ENCODE measurements at regions of chr19 and their contacts with region 1.

Region 1: DNA sequence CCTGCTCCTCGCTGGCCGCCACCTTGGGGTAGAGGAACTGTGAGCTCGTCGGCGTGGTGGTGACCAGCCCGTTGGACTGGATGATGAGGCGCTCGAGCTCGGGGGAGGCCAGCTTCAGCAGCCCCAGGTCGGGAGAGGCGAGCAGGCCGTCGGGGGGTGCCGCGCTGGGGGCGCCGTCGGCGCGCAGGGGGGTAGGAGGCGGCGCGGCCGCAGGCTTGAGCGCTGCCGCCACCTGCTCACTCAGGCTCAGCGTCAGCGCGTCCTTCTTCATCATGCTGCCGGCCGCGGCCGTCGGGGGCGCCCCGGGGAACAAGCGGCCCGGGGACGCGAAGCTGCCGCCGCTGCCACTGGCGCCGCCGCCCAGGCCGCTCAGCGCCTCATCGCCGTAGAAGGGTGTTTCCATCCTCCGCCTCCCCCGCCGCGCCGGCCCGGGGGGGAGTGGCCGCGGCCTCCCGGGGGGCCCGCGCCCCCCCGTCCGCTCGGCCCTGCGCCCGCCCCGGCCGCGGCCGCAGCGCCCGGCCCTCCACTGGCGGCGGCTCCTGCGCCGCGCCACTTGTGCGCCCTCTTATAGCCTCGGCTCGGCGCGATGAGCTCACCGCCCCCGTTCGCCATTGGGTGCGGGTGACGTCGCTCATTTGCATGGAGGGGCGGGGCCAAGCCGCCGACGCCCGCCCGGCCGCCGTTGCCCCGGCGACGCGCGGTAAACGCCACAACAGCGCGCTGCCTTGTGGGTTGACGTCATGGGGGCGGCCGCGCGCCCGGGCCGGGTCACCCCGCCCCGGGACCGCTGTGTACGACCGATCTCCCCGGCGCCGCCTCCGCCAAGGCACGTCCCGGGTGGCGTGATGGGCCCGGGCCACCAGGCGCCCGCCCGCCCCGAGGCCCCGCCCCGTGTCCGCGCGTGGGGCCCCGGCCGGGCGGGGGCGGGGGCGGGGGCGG is at the start of gene JUND:
- DNase-seq: peak; percentile 98
- ATAC-seq: peak; percentile 82
- H3K4me3 ChIP-seq: peak within 1 kb of the TSS; percentile 89
- H3K27ac ChIP-seq: peak within 1 kb of the TSS; percentile 99
- H3K4me1 ChIP-seq: peaks cover 18% of the 10 kb centered on the region
- H3K27me3 ChIP-seq: no peaks in the 10 kb centered on the region
- CTCF ChIP-seq: no peak
- total RNA-seq, gene JUND: 151 and 157 TPM in 2 replicates

Region 2: DNA sequence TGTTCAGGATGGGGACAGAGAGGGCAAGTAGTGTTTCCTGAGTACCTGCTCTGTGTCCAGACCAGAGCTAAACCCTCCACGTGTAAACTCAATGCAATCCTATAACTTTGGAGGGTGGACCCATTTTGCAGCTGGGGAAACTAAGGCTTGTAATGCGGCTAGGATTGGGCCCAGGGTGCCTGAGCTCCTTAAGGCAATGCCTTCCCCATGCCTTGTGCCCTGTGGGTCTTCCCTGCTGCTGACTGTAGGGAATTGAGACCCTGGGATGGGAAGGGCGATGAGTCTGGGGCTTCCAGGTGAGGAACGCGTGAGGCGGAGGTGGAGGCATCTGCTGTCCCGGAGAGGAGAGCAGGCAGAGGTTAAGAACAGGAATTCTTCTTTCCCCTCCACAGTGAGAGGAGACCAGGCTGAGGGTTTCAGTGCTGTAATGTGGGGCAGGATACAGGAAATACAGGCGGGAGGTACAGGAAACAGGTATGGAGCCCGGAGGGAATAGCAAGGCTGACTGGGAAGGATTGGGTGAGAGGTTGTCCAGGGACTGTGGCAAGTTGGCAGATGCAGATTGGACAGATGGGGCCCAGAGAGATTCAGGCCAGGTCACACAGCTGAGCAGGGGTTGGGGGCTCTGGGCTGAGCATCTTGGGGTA is 791.8 kb before region 1 on chr19:
- CTCF ChIA-PET with region 1: no interaction called
- POLR2A ChIA-PET with region 1: interaction called, 19 read pairs
- intact Hi-C with region 1: no loop called
- DNase-seq: no peak
- ATAC-seq: no peak
- H3K4me3 ChIP-seq: no peak overlapping the region
- H3K27ac ChIP-seq: no peak overlapping the region
- H3K4me1 ChIP-seq: peaks cover 7% of the 10 kb centered on the region
- H3K27me3 ChIP-seq: no peaks in the 10 kb centered on the region
- CTCF ChIP-seq: peak; percentile 28

Region 3: GRCh38 chr19:18029617-18030338 is 251.6 kb before region 1 on chr19:
- CTCF ChIA-PET with region 1: no interaction called
- POLR2A ChIA-PET with region 1: no interaction called
- intact Hi-C with region 1: no loop called
- DNase-seq: peak; percentile 91
- ATAC-seq: peak; percentile 91
- H3K4me3 ChIP-seq: peak overlapping the region; percentile 32; the same call in 1 of the 2 replicates
- H3K27ac ChIP-seq: peak overlapping the region; percentile 70
- H3K4me1 ChIP-seq: peaks cover 22% of the 10 kb centered on the region
- H3K27me3 ChIP-seq: no peaks in the 10 kb centered on the region
- CTCF ChIP-seq: no peak

Region 4: DNA sequence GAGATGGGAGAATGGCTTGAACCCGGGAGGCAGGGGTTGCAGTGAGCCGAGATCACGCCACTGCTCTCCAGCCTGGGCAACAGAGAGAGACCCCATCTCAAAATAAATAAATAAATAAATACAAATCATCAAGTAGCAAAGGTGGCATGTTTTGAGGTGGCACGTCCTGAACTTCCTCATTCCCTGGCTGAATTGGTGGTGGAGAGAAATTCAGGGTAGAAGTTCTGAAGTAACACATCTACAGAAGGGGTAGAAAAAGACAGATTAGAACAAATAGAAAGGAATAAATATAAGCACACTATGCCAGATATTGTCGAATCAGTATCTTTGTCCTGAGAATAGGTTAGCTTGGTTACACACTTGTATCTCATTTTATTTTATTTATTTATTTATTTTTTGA is 101.4 kb before region 1 on chr19:
- CTCF ChIA-PET with region 1: no interaction called
- POLR2A ChIA-PET with region 1: no interaction called
- intact Hi-C with region 1: no loop called
- DNase-seq: no peak
- ATAC-seq: no peak
- H3K4me3 ChIP-seq: no peak overlapping the region
- H3K27ac ChIP-seq: no peak overlapping the region
- H3K4me1 ChIP-seq: peaks cover 5% of the 10 kb centered on the region; the same call in 1 of the 2 replicates
- H3K27me3 ChIP-seq: no peaks in the 10 kb centered on the region
- CTCF ChIP-seq: no peak

Region 5: GRCh38 chr19:18239303-18239702 is 42.0 kb before region 1 on chr19:
- CTCF ChIA-PET with region 1: no interaction called
- POLR2A ChIA-PET with region 1: no interaction called
- intact Hi-C with region 1: no loop called
- DNase-seq: no peak
- ATAC-seq: no peak
- H3K4me3 ChIP-seq: no peak overlapping the region
- H3K27ac ChIP-seq: no peak overlapping the region
- H3K4me1 ChIP-seq: no peaks in the 10 kb centered on the region
- H3K27me3 ChIP-seq: no peaks in the 10 kb centered on the region
- CTCF ChIP-seq: no peak

Region 6: DNA sequence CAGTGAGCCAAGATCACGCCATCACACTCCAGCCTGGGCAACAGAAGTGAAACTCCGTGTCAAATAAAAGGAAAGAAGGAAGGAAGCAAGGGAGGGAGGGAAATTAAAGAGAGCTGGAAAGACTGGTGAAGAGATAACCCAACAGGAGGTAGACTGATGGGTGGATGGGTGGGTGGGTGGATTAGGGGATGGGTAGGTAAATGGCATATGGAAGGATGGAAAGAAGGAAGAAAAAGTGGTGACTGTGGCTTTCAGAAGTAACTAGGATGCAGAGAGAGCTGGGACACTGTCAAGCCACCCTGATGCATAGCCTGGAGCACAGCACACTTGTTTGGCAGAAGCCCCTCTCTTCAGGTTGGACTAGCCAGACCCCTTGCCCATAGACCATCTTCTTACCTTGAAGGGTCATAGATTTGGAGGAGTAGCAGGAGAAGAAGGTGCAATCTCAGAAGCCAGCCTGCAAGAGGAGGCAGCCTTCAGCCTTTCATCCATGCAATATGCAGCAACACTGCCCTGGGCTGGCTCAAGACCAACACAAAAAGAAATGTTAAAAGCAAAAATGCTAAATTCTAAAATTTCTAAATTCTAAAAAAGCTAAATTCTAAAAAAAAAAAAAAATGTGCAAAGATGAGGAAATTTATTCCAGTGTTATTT is 12.2 kb before region 1 on chr19:
- CTCF ChIA-PET with region 1: interaction called, 17 read pairs
- POLR2A ChIA-PET with region 1: interaction called, 19 read pairs
- intact Hi-C with region 1: no loop called
- DNase-seq: no peak
- ATAC-seq: no peak
- H3K4me3 ChIP-seq: no peak overlapping the region
- H3K27ac ChIP-seq: no peak overlapping the region
- H3K4me1 ChIP-seq: peaks cover under 1% of the 10 kb centered on the region; the same call in 1 of the 2 replicates
- H3K27me3 ChIP-seq: no peaks in the 10 kb centered on the region
- CTCF ChIP-seq: no peak

Region 7: GRCh38 chr19:18300930-18301717 is 19.8 kb after region 1 on chr19:
- CTCF ChIA-PET with region 1: interaction called, 18 read pairs
- POLR2A ChIA-PET with region 1: interaction called, 4 read pairs
- intact Hi-C with region 1: no loop called
- DNase-seq: peak; percentile 51
- ATAC-seq: peak; percentile 75
- H3K4me3 ChIP-seq: no peak overlapping the region
- H3K27ac ChIP-seq: no peak overlapping the region
- H3K4me1 ChIP-seq: peaks cover 19% of the 10 kb centered on the region
- H3K27me3 ChIP-seq: no peaks in the 10 kb centered on the region
- CTCF ChIP-seq: no peak

Region 8: GRCh38 chr19:18328340-18329034 is 47.1 kb after region 1 on chr19:
- CTCF ChIA-PET with region 1: interaction called, 64 read pairs
- POLR2A ChIA-PET with region 1: interaction called, 21 read pairs
- intact Hi-C with region 1: loop called (anchors 1 kb)
- DNase-seq: peak; percentile 97
- ATAC-seq: peak; percentile 97
- H3K4me3 ChIP-seq: peak overlapping the region; percentile 50
- H3K27ac ChIP-seq: no peak overlapping the region
- H3K4me1 ChIP-seq: peaks cover 10% of the 10 kb centered on the region
- H3K27me3 ChIP-seq: no peaks in the 10 kb centered on the region
- CTCF ChIP-seq: peak; percentile 89

Region 9: DNA sequence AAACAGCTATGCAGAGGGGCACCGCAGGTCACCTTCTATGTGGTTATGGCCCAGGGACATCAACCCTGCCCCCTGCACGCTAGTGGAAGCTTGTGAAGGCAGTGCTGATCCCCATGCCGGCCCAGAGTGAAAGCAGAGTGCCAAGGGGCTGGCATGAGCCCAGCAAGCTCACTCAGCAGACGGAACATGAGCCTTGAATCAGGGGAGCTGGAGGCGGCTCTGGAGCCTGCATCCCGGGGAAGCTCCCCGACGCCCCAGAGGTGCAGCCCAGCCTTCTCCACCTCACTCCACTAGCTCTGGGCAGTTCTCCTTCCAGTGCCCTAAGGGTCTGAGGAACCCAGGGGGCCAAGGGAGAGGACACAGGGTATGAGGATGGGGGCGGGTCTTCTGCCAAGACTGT is 175.6 kb after region 1 on chr19:
- CTCF ChIA-PET with region 1: no interaction called
- POLR2A ChIA-PET with region 1: no interaction called
- intact Hi-C with region 1: no loop called
- DNase-seq: no peak
- ATAC-seq: no peak
- H3K4me3 ChIP-seq: no peak overlapping the region
- H3K27ac ChIP-seq: no peak overlapping the region
- H3K4me1 ChIP-seq: peaks cover 47% of the 10 kb centered on the region
- H3K27me3 ChIP-seq: no peaks in the 10 kb centered on the region
- CTCF ChIP-seq: no peak